H1 (cell line): ENCODE measurements at regions of chr7 and their contacts with region 1.

Region 1: DNA sequence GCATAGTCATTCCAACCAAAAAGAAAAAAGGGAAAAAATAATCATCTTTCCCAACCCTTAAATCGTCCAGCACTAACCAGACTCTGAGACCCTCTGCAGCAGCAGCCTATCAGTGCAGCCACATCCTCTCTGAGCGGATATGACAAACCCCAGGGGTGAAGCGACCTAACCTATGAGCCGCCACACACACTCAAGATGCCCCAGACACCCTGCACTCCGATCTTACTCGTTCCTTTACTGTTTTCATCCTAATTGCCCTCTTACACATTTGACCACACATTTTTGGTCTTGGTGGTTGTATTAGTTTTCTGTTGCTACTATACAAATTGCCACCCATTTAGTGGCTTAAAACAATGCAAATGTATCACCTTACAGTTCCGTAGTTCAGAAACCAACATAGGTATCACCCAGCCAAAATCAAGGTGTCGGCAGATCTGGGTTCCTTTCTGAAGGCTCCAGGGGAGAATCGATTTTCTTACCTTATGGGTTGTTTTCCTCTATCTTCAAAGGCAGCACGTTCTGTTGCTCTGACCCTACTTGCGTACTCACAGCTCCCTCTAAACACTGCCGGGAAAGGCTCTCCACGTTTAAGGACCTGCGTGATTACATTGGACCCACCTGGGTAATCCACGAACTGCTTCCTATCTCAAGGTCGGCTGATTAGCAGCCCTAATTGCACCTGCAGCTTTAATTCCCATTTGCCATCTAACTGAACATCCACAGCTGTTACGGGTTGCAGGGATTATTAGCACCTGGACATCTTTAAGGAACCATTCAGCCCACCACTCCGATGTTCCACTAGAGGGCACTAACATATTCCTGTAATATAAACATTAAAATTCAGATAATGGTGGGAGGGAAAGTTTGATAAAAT is 37.3 kb upstream of the PRSS1 start:
- DNase-seq: no peak
- H3K4me3 ChIP-seq: no peak overlapping the region
- H3K27ac ChIP-seq: no peak overlapping the region
- H3K4me1 ChIP-seq: peaks cover 0 to 9% (median 6%) of the 10 kb centered on the region in 4 experiments; a peak in 4 of 7 replicates
- H3K27me3 ChIP-seq: no peaks in the 10 kb centered on the region
- CTCF ChIP-seq: peak in 2 of 3 experiments; percentile 46 to 54; a peak in 3 of 4 replicates
- EP300 ChIP-seq: no peak
- POLR2A ChIP-seq: no peak
- RAD21 ChIP-seq: peak; percentile 28 to 52; a peak in 3 of 4 replicates

Region 2: DNA sequence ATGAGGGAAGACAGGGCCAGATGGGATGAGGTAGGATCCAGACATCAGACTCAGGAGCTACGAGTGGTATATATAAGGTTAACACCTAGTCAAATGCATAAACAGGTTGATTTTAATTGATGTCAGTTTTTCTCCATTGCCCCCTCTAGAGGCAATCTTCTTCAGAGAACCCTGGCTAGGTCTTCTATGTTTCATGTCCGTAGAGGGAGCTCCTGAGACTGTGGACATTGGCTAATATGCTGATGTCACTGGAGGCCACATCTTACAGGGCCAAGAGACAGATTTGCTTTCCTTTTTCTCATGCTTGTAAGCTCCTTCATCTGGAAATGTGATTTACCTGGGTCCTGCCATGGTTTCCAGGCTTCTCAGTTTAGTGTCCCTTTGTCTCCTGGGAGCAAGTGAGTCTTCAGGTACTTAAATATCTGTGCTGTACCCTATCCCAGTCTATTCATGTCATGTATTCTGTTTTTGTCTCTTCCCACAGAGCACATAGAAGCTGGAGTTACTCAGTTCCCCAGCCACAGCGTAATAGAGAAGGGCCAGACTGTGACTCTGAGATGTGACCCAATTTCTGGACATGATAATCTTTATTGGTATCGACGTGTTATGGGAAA is 124.3 kb before region 1 on chr7:
- CTCF ChIA-PET with region 1: no interaction called
- POLR2A ChIA-PET with region 1: no interaction called
- DNase-seq: no peak
- H3K4me3 ChIP-seq: no peak overlapping the region
- H3K27ac ChIP-seq: no peak overlapping the region
- H3K4me1 ChIP-seq: peaks cover 0 to 5% (median 3%) of the 10 kb centered on the region in 4 experiments; a peak in 3 of 7 replicates
- H3K27me3 ChIP-seq: no peaks in the 10 kb centered on the region
- CTCF ChIP-seq: peak in 2 of 3 experiments; percentile 84 to 99; a peak in 3 of 4 replicates
- EP300 ChIP-seq: no peak
- POLR2A ChIP-seq: no peak
- RAD21 ChIP-seq: peak; percentile 26 to 40; a peak in 3 of 4 replicates

Region 3: GRCh38 chr7:142669074-142669654 is 42.8 kb before region 1 on chr7:
- CTCF ChIA-PET with region 1: interaction called, 14 read pairs
- POLR2A ChIA-PET with region 1: no interaction called
- DNase-seq: no peak
- H3K4me3 ChIP-seq: no peak overlapping the region
- H3K27ac ChIP-seq: no peak overlapping the region
- H3K4me1 ChIP-seq: no peaks in the 10 kb centered on the region
- H3K27me3 ChIP-seq: no peaks in the 10 kb centered on the region
- CTCF ChIP-seq: peak in 2 of 3 experiments; percentile 38 to 48; a peak in 2 of 4 replicates
- EP300 ChIP-seq: no peak
- POLR2A ChIP-seq: no peak
- RAD21 ChIP-seq: peak; percentile 64 to 65

Region 4: GRCh38 chr7:142689439-142690120 is 22.4 kb before region 1 on chr7:
- CTCF ChIA-PET with region 1: interaction called, 14 read pairs
- POLR2A ChIA-PET with region 1: no interaction called
- DNase-seq: no peak
- H3K4me3 ChIP-seq: no peak overlapping the region
- H3K27ac ChIP-seq: no peak overlapping the region
- H3K4me1 ChIP-seq: no peaks in the 10 kb centered on the region
- H3K27me3 ChIP-seq: no peaks in the 10 kb centered on the region
- CTCF ChIP-seq: peak in 2 of 3 experiments; percentile 10 to 29; a peak in 2 of 4 replicates
- EP300 ChIP-seq: no peak
- POLR2A ChIP-seq: no peak
- RAD21 ChIP-seq: peak; percentile 38 to 42

Region 5: GRCh38 chr7:142698429-142698828 is 13.6 kb before region 1 on chr7:
- CTCF ChIA-PET with region 1: interaction called, 14 read pairs
- POLR2A ChIA-PET with region 1: interaction called, 3 read pairs
- DNase-seq: no peak
- H3K4me3 ChIP-seq: no peak overlapping the region
- H3K27ac ChIP-seq: no peak overlapping the region
- H3K4me1 ChIP-seq: peaks cover 12 to 21% (median 17%) of the 10 kb centered on the region in 4 experiments; a peak in 6 of 7 replicates
- H3K27me3 ChIP-seq: no peaks in the 10 kb centered on the region
- CTCF ChIP-seq: no peak
- EP300 ChIP-seq: no peak
- POLR2A ChIP-seq: no peak
- RAD21 ChIP-seq: no peak

Region 6: GRCh38 chr7:142722248-142722794 is 10.3 kb after region 1 on chr7:
- CTCF ChIA-PET with region 1: interaction called, 19 read pairs
- POLR2A ChIA-PET with region 1: no interaction called
- DNase-seq: no peak
- H3K4me3 ChIP-seq: no peak overlapping the region
- H3K27ac ChIP-seq: no peak overlapping the region
- H3K4me1 ChIP-seq: no peaks in the 10 kb centered on the region
- H3K27me3 ChIP-seq: no peaks in the 10 kb centered on the region
- CTCF ChIP-seq: no peak
- EP300 ChIP-seq: no peak
- POLR2A ChIP-seq: no peak
- RAD21 ChIP-seq: no peak

Region 7: DNA sequence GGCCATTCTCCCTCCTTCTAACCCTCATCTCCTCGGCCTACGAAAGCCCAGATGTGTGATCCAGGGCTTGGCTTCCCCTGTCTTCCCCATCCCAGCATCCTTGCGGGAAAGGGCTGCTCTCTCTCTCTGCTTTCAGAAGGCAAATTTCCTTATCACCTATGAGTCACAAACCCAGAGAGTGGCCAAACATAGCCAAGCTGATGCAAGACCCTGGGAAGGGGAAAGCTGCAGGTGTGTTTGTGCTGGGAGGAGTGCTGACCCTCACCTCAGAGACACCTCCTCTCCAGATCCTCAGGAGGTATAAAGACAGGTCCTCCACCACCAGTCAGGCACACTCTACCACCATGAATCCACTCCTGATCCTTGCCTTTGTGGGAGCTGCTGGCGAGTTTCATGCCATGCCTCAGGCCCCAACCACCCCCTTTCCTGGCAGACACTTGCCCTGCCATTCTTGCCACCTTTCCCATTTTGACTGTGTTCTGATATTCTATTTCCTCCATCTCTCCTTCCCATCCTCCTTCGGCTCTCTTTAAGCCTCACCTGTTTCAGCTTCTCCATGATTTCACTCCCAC is 48.2 kb after region 1 on chr7:
- CTCF ChIA-PET with region 1: interaction called, 23 read pairs
- POLR2A ChIA-PET with region 1: no interaction called
- DNase-seq: no peak
- H3K4me3 ChIP-seq: no peak overlapping the region
- H3K27ac ChIP-seq: no peak overlapping the region
- H3K4me1 ChIP-seq: peaks cover 0 to 4% (median 0%) of the 10 kb centered on the region in 4 experiments; a peak in 1 of 7 replicates
- H3K27me3 ChIP-seq: no peaks in the 10 kb centered on the region
- CTCF ChIP-seq: no peak
- EP300 ChIP-seq: no peak
- POLR2A ChIP-seq: no peak
- RAD21 ChIP-seq: no peak

Region 8: DNA sequence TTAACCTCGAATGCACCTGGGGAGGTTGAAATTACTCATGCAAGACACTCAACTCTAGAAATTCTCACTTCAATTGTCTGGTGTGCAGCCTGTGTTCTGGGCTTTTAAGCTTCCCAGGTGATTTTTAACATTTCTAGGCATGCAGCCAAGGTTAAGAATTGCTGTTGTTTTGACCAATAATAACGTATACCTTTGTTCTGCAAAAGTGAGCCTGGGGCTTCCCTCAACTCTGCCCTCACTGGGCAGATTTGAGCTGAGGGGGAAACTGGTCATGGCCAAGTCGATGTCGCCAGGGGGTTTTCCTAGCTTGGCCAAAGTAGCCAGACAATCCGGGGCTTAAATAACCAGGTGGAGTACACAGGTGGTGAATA is 59.4 kb after region 1 on chr7:
- CTCF ChIA-PET with region 1: interaction called, 15 read pairs
- POLR2A ChIA-PET with region 1: no interaction called
- DNase-seq: no peak
- H3K4me3 ChIP-seq: no peak overlapping the region
- H3K27ac ChIP-seq: no peak overlapping the region
- H3K4me1 ChIP-seq: no peaks in the 10 kb centered on the region
- H3K27me3 ChIP-seq: no peaks in the 10 kb centered on the region
- CTCF ChIP-seq: no peak
- EP300 ChIP-seq: no peak
- POLR2A ChIP-seq: no peak
- RAD21 ChIP-seq: no peak

Region 9: DNA sequence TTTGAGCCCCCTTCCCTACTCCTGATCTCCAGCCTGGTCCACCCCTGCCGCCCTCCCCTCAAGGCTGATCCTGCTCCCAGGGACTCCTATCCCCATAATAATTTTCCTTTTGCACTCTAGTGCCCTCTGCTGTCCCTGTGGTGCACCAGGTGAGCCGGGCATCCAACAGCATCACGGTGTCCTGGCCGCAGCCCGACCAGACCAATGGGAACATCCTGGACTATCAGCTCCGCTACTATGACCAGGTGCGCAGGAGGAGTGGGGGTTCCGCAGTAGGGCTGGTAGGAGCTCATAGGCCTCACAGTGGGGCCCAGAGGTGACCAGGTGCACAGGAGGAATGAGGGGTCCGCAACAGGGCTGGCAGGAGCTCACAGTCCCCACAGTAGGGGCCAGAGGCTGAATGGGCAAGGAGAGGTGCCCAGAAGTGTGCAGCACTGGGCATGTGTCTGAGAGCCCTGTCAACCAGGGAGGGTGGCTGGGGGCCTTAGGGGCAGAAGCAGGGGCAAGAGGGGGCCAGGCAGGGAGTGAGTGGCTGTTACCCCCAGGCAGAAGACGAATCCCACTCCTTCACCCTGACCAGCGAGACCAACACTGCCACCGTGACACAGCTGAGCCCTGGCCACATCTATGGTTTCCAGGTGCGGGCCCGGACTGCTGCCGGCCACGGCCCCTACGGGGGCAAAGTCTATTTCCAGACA is 154.5 kb after region 1 on chr7:
- CTCF ChIA-PET with region 1: no interaction called
- POLR2A ChIA-PET with region 1: no interaction called
- DNase-seq: peak in 1 of 2 experiments; percentile 82
- H3K4me3 ChIP-seq: no peak overlapping the region
- H3K27ac ChIP-seq: no peak overlapping the region
- H3K4me1 ChIP-seq: peaks cover 3 to 10% (median 9%) of the 10 kb centered on the region in 4 experiments; a peak in 6 of 7 replicates
- H3K27me3 ChIP-seq: no peaks in the 10 kb centered on the region
- CTCF ChIP-seq: peak; percentile 79 to 84 (median 83)
- EP300 ChIP-seq: no peak
- POLR2A ChIP-seq: no peak
- RAD21 ChIP-seq: peak; percentile 67 to 77

Region 10: DNA sequence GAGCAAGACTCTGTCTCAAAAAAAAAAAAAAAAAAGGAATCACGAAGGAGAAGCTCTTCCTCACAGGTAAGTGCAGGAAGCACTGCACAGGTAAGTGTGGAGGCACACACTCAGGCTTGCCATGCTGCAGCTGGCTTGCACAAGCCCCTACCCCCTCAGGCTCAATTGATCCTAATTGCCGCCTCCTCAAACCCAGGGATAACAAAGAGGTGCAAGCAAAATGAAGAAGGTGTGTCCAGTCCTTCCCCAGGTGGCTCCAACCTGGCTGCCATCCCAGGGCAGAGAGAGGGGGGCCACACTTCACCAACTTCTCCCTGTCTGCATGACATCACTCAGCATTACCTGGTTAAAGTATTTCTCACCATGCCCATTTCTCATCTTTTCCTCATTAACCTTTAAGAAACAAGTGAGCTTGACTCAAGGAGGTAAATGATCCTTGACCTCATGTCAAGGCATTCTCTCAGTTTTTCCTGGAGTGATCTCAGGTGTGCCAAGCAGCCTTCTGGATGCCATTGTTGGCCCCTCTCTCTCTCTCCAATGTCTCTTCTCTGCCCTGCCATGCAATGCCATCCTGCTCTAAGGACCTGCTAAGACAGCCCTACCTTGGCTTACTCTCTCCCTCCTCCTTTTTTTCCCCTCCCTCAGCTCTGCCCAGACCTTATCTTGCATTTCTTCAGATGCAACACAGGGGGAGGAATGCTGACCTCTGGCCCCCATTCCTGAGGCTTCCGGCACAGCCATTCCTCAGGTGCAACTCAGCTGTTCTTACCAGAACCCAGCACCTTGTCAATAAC is 186.6 kb after region 1 on chr7:
- CTCF ChIA-PET with region 1: no interaction called
- POLR2A ChIA-PET with region 1: no interaction called
- DNase-seq: peak in 1 of 2 experiments; percentile 17
- H3K4me3 ChIP-seq: no peak overlapping the region
- H3K27ac ChIP-seq: no peak overlapping the region
- H3K4me1 ChIP-seq: peaks cover 0 to 3% (median 0%) of the 10 kb centered on the region in 4 experiments; a peak in 1 of 7 replicates
- H3K27me3 ChIP-seq: no peaks in the 10 kb centered on the region; a peak in 1 of 7 replicates
- CTCF ChIP-seq: no peak
- EP300 ChIP-seq: no peak
- POLR2A ChIP-seq: no peak
- RAD21 ChIP-seq: no peak